Gastrocnemius medialis (tissue), 4 donors: ENCODE measurements at regions of chr14 and their contacts with region 1.

Region 1: GRCh38 chr14:75982266-75983018 is 647 bp upstream of the TGFB3 start:
- DNase-seq: peak; percentile 75 to 81
- ATAC-seq: peak; percentile 67 to 75
- H3K4me3 ChIP-seq: peak overlapping the region; percentile 62 to 94 (median 74)
- H3K27ac ChIP-seq: peak overlapping the region; percentile 89 to 97 (median 94)
- H3K4me1 ChIP-seq: peaks cover 49 to 53% of the 10 kb centered on the region in 2 donors
- H3K27me3 ChIP-seq: no peaks in the 10 kb centered on the region
- CTCF ChIP-seq: peak in 4 of 5 experiments; percentile 59 to 89 (median 80)
- POLR2A ChIP-seq: no peak

Region 2: DNA sequence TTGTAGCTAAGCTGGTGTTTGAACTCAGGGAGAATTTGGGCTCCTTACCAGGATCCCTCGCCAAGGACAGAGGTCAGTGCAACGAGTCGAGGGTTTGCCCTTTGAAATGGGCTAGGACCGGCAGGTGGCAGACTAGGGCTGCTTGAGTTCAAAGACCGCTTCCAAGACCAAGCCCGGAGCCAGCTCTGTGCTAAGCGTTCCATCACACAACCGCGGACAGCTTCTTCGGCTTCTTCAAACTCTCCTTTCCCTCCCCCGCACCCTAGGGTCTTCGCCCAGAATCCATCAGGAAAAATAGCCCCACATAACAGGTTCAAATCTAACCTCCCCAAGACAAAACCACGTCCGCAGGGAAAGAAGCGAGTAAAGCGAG is 404.7 kb before region 1 on chr14:
- in situ Hi-C with region 1: no loop called
- intact Hi-C with region 1: loop called (anchors 5 kb)
- DNase-seq: peak; percentile 83 to 91
- ATAC-seq: peak; percentile 76 to 81
- H3K4me3 ChIP-seq: peak overlapping the region; percentile 66 to 75 (median 71)
- H3K27ac ChIP-seq: peak overlapping the region; percentile 90 to 95 (median 93)
- H3K4me1 ChIP-seq: peaks cover 21 to 26% of the 10 kb centered on the region in 2 donors
- H3K27me3 ChIP-seq: no peaks in the 10 kb centered on the region
- CTCF ChIP-seq: peak; percentile 63 to 87 (median 78)
- POLR2A ChIP-seq: no peak

Region 3: GRCh38 chr14:75709207-75709812 is 273.1 kb before region 1 on chr14:
- in situ Hi-C with region 1: loop called (anchors 5 kb)
- intact Hi-C with region 1: loop called (anchors 1 kb)
- DNase-seq: peak; percentile 54 to 70
- ATAC-seq: peak; percentile 48 to 63
- H3K4me3 ChIP-seq: no peak overlapping the region
- H3K27ac ChIP-seq: no peak overlapping the region
- H3K4me1 ChIP-seq: peaks cover 16 to 23% of the 10 kb centered on the region in 2 donors
- H3K27me3 ChIP-seq: no peaks in the 10 kb centered on the region
- CTCF ChIP-seq: peak; percentile 71 to 84 (median 74)
- POLR2A ChIP-seq: no peak

Region 4: GRCh38 chr14:75725481-75725880 is 257.0 kb before region 1 on chr14:
- in situ Hi-C with region 1: no loop called
- intact Hi-C with region 1: no loop called
- DNase-seq: peak; percentile 64 to 71
- ATAC-seq: peak; percentile 97
- H3K4me3 ChIP-seq: no peak overlapping the region
- H3K27ac ChIP-seq: peak overlapping the region; percentile 47 to 71 (median 60)
- H3K4me1 ChIP-seq: peaks cover 33 to 42% of the 10 kb centered on the region in 2 donors
- H3K27me3 ChIP-seq: no peaks in the 10 kb centered on the region
- CTCF ChIP-seq: no peak
- POLR2A ChIP-seq: no peak

Region 5: GRCh38 chr14:75906676-75907280 is 75.7 kb before region 1 on chr14:
- in situ Hi-C with region 1: loop called (anchors 5 to 10 kb)
- intact Hi-C with region 1: loop called (anchors 1 kb)
- DNase-seq: peak; percentile 35 to 37
- ATAC-seq: peak in 1 of 2 donors; percentile 41
- H3K4me3 ChIP-seq: no peak overlapping the region
- H3K27ac ChIP-seq: peak overlapping the region; percentile 55 to 81 (median 70)
- H3K4me1 ChIP-seq: peaks cover 29 to 44% of the 10 kb centered on the region in 2 donors
- H3K27me3 ChIP-seq: no peaks in the 10 kb centered on the region
- CTCF ChIP-seq: peak; percentile 79 to 91 (median 88)
- POLR2A ChIP-seq: no peak

Region 6: DNA sequence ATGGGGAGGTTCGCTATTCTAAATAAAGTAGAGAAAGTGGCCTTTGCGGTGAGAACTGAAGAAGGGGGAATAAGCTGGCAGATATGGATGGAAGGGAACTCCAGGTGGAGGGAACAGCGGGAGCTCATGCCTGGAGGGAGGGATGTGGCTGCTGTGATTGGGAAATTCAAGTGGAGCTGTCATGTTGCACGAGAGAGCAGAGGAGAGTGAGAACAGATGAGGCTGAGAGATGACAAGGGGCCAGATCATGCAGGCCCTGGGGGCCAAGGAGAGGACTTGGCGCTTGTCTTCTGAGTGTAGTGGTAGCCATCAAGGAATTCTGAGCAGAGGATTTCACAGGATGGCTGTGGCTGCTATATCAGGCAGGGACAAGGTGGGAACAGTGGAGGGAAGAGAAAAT is 35.7 kb before region 1 on chr14:
- in situ Hi-C with region 1: no loop called
- intact Hi-C with region 1: no loop called
- DNase-seq: no peak
- ATAC-seq: no peak
- H3K4me3 ChIP-seq: no peak overlapping the region
- H3K27ac ChIP-seq: no peak overlapping the region
- H3K4me1 ChIP-seq: peaks cover 0 to 8% of the 10 kb centered on the region in 2 donors
- H3K27me3 ChIP-seq: no peaks in the 10 kb centered on the region
- CTCF ChIP-seq: no peak
- POLR2A ChIP-seq: no peak

Region 7: GRCh38 chr14:76151398-76152339 is 169.2 kb after region 1 on chr14 and contains the start of gene GPATCH2L:
- in situ Hi-C with region 1: no loop called
- intact Hi-C with region 1: loop called (anchors 5 kb)
- DNase-seq: peak; percentile 89 to 95
- ATAC-seq: peak; percentile 90 to 95
- H3K4me3 ChIP-seq: peak within 1 kb of the TSS; percentile 81 to 99 (median 92)
- H3K27ac ChIP-seq: peak within 1 kb of the TSS; percentile 83 to 95 (median 94)
- H3K4me1 ChIP-seq: peaks cover 42 to 44% of the 10 kb centered on the region in 2 donors
- H3K27me3 ChIP-seq: no peaks in the 10 kb centered on the region
- CTCF ChIP-seq: no peak
- POLR2A ChIP-seq: peak; percentile 93
- total RNA-seq, gene GPATCH2L: 24.6 to 63.5 (median 41.9) TPM